Endothelial cell of umbilical vein (primary cell): ENCODE measurements at regions of chr1 and their contacts with region 1.

Region 1: DNA sequence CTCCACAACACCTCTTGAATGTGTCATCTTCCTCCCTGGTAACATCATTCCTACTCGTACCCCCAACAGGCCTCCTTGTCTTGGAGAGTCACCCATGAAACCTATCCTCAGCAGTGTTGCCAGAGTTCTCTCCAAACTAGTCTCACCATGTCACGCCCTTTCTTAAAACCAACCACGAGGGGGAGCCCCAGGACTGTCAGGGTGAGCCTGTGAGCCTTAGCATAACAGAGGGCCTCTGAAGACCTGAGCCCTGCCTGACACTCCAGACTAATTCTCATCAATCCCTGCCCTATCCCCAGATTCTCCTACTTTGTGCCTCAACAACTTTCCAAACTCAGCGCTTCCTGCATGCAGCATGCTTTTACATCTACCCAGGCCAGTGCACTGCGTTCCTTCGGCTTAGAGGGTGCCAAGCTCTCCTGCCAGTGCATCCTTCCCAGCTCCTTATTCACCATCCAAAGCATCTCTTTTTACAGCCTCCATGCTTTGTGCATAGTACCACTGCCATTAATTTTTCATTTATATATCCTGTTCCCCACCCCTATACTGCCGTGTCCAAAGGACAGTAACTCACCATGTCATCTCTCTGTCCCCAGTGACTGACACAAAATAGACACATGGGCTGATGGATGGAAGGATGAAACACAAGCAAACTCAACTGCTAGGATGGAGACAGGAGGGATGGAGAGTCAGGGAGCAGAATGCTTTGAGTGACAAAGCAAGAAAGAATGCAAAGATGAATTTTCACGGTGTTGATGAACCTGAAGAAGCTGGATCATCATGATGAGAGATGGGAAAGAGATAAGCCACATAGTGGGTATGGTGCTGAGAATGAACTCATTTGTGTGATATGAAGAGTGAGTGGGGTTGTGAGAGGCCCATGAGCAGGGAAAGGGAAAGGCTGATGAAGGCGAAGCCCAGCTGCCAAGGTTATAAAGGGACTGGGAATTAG is 34.0 kb downstream of the ZNF697 start:
- DNase-seq: peak; percentile 86
- H3K4me3 ChIP-seq: no peak overlapping the region
- H3K27ac ChIP-seq: no peak overlapping the region
- H3K4me1 ChIP-seq: no peaks in the 10 kb centered on the region
- H3K27me3 ChIP-seq: no peaks in the 10 kb centered on the region
- CTCF ChIP-seq: peak; percentile 60 to 72
- POLR2A ChIP-seq: no peak

Region 2: DNA sequence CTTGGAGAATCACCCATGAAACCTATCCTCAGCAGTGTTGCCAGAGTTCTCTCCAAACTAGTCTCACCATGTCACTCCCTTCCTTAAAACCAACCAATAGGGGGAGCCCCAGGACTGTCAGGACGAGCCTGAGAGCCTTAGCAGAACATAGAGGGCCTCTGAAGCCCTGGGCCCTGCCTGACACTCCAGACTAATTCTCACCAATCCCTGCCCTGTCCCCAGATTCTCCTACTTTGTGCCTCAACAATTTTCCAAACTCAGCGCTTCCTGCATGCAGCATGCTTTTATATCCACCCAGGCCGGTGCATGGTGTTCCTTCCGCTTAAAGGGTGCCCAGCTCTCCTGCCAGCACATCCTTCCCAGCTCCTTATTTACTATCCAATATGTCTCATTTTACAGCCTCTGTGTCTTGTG is 64.3 kb before region 1 on chr1:
- CTCF ChIA-PET with region 1: interaction called, 10 read pairs
- POLR2A ChIA-PET with region 1: no interaction called
- dilution Hi-C with region 1: no loop called
- intact Hi-C with region 1: loop called (anchors 1 kb)
- DNase-seq: peak; percentile 63
- H3K4me3 ChIP-seq: no peak overlapping the region
- H3K27ac ChIP-seq: no peak overlapping the region
- H3K4me1 ChIP-seq: no peaks in the 10 kb centered on the region
- H3K27me3 ChIP-seq: peaks cover 2 to 4% of the 10 kb centered on the region in 2 experiments
- CTCF ChIP-seq: peak; percentile 64 to 74
- POLR2A ChIP-seq: no peak

Region 3: DNA sequence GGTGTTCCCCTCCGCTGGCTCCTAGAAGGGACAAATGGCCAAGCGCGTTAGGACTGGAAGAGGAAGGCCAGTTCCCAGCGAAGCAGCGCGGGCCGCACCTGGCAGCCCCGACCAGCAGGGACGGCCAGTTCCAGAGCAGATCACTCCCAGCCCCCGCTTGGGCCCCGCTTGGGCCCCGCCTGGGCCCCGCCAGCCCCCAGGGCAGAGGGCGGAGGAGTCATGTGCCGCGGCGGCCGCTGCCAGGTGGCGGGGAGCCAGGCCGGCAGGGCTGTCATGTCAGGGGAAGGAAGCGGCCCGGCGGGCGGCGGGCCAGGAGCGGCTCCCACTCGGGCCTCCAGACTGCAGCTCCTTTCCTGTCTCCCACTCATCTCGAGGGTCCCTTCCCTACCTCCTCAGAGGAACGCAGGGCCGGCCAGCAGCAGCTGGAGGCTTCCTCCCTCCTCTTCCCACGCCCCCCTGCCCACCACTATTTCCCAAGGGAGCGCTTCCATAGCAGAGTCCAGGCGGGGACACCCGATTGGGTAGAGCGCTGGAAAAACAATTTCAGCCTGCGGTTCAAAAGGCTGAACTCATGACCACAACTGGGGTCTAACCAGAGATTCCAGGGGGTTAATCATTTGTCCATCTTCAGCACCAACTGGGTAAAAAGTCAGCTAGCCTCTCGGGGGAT is 17.5 kb after region 1 on chr1:
- CTCF ChIA-PET with region 1: interaction called, 11 read pairs
- POLR2A ChIA-PET with region 1: interaction called, 7 read pairs
- dilution Hi-C with region 1: no loop called
- intact Hi-C with region 1: loop called (anchors 2 kb)
- DNase-seq: peak; percentile 92
- H3K4me3 ChIP-seq: peak overlapping the region in 1 of 3 experiments; percentile 20
- H3K27ac ChIP-seq: peak overlapping the region; percentile 91
- H3K4me1 ChIP-seq: peaks cover 63% of the 10 kb centered on the region
- H3K27me3 ChIP-seq: no peaks in the 10 kb centered on the region
- CTCF ChIP-seq: no peak
- POLR2A ChIP-seq: peak; percentile 64

Region 4: DNA sequence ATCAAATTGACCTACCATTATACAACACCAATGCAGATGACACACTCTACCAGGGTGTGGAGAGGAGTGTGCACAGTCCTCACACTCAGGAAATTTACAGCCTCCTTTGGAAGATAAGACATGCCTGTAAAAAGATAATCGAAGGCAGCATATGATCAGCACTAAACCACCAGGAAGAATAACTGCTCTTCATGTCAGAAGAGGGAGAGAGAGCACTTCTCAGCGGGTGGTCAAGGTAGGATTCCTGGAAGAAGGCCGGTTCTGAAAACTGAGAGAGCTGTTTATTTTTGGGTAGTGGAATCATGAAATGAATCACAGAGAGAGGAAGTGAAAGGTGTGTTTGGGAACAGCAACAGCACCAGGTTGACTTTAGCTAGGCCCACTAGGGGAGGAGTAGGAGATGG is 48.0 kb after region 1 on chr1:
- CTCF ChIA-PET with region 1: interaction called, 59 read pairs
- POLR2A ChIA-PET with region 1: interaction called, 3 read pairs
- dilution Hi-C with region 1: no loop called
- intact Hi-C with region 1: loop called (anchors 1 kb)
- DNase-seq: no peak
- H3K4me3 ChIP-seq: no peak overlapping the region
- H3K27ac ChIP-seq: no peak overlapping the region
- H3K4me1 ChIP-seq: no peaks in the 10 kb centered on the region
- H3K27me3 ChIP-seq: no peaks in the 10 kb centered on the region
- CTCF ChIP-seq: no peak
- POLR2A ChIP-seq: no peak

Region 5: DNA sequence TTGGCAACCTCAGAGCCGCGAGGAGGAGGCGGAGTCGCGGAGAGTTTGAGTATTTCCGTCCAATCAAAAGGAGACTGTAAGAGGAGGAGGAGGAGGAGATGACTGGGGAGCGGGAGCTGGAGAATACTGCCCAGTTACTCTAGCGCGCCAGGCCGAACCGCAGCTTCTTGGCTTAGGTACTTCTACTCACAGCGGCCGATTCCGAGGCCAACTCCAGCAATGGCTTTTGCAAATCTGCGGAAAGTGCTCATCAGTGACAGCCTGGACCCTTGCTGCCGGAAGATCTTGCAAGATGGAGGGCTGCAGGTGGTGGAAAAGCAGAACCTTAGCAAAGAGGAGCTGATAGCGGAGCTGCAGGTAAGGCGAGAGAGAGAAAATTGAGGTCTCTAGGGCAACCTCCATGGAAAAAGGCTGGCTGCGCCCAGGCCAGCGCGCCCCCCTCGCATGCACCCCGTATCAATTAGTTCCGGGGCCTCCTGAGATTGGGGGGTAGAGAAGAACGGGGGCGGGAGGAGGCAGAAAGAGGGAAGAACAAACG is 97.8 kb after region 1 on chr1 and contains the start of gene PHGDH:
- CTCF ChIA-PET with region 1: interaction called, 16 read pairs
- POLR2A ChIA-PET with region 1: no interaction called
- dilution Hi-C with region 1: no loop called
- intact Hi-C with region 1: no loop called
- DNase-seq: peak; percentile 75
- H3K4me3 ChIP-seq: peak within 1 kb of the TSS; percentile 69 to 81 (median 69)
- H3K27ac ChIP-seq: peak within 1 kb of the TSS; percentile 51
- H3K4me1 ChIP-seq: peaks cover 9% of the 10 kb centered on the region
- H3K27me3 ChIP-seq: peaks cover 7 to 15% of the 10 kb centered on the region in 2 experiments
- CTCF ChIP-seq: no peak
- POLR2A ChIP-seq: peak; percentile 28
- total RNA-seq, gene PHGDH: 101 and 120 TPM in 2 replicates

Region 6: DNA sequence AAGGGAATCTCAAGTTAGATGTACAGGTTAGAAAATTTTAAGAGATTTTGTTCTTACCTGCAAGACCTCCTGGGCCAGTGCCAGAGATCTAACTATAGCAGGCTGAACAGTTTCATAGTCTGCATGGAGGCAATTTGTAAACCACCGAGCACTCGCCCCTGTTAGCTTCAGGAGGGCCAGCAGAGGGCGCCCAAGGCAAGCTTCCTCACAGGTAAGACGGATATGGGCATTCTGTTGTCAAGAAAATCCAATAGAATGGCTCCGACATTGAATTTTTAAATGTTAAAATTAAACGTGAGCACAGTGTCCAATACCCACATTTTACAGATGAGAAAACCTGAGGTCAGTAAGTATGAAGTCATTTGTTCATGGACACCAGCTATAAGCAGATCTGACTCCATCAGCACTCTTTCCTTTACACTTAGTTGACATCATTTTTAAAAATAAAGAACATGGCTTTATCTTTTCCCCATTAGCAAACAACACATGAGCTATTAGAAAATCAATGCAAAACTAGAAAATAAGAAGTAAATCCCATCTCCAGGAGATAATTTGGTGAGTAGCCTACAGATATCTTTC is 195.0 kb after region 1 on chr1:
- CTCF ChIA-PET with region 1: interaction called, 13 read pairs
- POLR2A ChIA-PET with region 1: no interaction called
- dilution Hi-C with region 1: no loop called
- intact Hi-C with region 1: loop called (anchors 1 kb)
- DNase-seq: peak; percentile 65
- H3K4me3 ChIP-seq: no peak overlapping the region
- H3K27ac ChIP-seq: no peak overlapping the region
- H3K4me1 ChIP-seq: no peaks in the 10 kb centered on the region
- H3K27me3 ChIP-seq: peaks cover 14 to 39% of the 10 kb centered on the region in 2 experiments
- CTCF ChIP-seq: peak; percentile 87 to 89
- POLR2A ChIP-seq: no peak